GM12878 (cell line): ENCODE measurements at regions of chr5 and their contacts with region 1.

Region 1: DNA sequence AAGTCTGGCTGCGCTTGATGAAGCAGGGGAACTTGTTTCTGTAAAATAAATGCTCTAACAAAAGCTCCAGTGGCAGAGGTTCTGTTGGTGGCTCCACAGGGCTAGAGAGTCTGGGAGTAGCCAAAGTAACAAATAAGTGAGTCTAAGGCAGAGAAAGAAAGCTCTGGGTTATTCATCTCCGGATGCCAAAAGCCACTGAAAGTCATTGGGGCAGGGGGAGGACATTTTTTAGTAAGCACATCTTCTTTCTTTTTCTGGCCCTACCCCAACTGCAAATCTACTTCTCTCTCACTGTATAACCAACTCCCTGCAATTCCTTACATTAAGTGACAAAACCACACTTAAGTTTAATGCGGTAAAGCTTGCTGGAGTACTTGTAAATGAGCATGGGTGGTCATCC is 141.6 kb downstream of the INSYN2B start:
- DNase-seq: peak; percentile 45
- ATAC-seq: peak; percentile 92
- H3K4me3 ChIP-seq: no peak overlapping the region
- H3K27ac ChIP-seq: peak overlapping the region; percentile 76
- H3K4me1 ChIP-seq: peaks cover 28% of the 10 kb centered on the region
- H3K27me3 ChIP-seq: no peaks in the 10 kb centered on the region
- CTCF ChIP-seq: no peak
- EP300 ChIP-seq: no peak; a peak in 1 of 4 replicates
- POLR2A ChIP-seq: no peak
- RAD21 ChIP-seq: no peak

Region 2: GRCh38 chr5:169826618-169827017 is 12.1 kb before region 1 on chr5:
- CTCF ChIA-PET with region 1: interaction called, 7 read pairs
- POLR2A ChIA-PET with region 1: interaction called, 3 read pairs
- RAD21 ChIA-PET with region 1: interaction called, 13 read pairs
- SMC1A ChIA-PET with region 1: interaction called, 39 read pairs
- in situ Hi-C with region 1: no loop called
- intact Hi-C with region 1: no loop called
- DNase-seq: no peak
- ATAC-seq: peak; percentile 60
- H3K4me3 ChIP-seq: no peak overlapping the region
- H3K27ac ChIP-seq: no peak overlapping the region
- H3K4me1 ChIP-seq: no peaks in the 10 kb centered on the region; the same call in 1 of the 2 replicates
- H3K27me3 ChIP-seq: no peaks in the 10 kb centered on the region
- CTCF ChIP-seq: peak; percentile 7 to 13 (median 12); a peak in 1 of 6 replicates
- EP300 ChIP-seq: no peak
- POLR2A ChIP-seq: no peak
- RAD21 ChIP-seq: peak; percentile 34; the same call in 1 of the 2 replicates

Region 3: DNA sequence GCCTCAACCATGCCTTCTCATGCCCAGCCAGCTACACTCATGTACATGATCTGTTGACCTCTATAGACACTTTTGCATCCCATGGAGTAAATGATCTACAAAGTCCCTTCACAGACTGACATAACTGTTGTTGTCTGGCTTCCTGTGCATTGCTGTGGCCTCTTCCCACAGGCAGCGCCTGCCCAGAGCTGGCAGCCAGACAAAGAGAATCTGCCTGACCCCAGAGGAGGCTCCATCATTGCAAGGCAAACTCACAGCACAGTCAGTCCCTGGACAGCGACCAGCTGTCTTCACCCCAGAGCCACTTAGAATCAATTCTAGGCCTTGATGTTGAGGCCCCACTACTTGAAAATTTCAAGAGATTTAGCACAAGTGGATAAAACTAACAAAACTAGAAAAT is 76.1 kb after region 1 on chr5:
- CTCF ChIA-PET with region 1: no interaction called
- POLR2A ChIA-PET with region 1: no interaction called
- RAD21 ChIA-PET with region 1: no interaction called
- SMC1A ChIA-PET with region 1: no interaction called
- in situ Hi-C with region 1: no loop called
- intact Hi-C with region 1: no loop called
- DNase-seq: no peak
- ATAC-seq: no peak
- H3K4me3 ChIP-seq: no peak overlapping the region
- H3K27ac ChIP-seq: no peak overlapping the region
- H3K4me1 ChIP-seq: no peaks in the 10 kb centered on the region
- H3K27me3 ChIP-seq: no peaks in the 10 kb centered on the region
- CTCF ChIP-seq: no peak
- EP300 ChIP-seq: no peak
- POLR2A ChIP-seq: no peak
- RAD21 ChIP-seq: no peak

Region 4: GRCh38 chr5:170111088-170111785 is 272.5 kb after region 1 on chr5:
- CTCF ChIA-PET with region 1: no interaction called
- POLR2A ChIA-PET with region 1: no interaction called
- RAD21 ChIA-PET with region 1: no interaction called
- SMC1A ChIA-PET with region 1: no interaction called
- in situ Hi-C with region 1: no loop called
- intact Hi-C with region 1: no loop called
- DNase-seq: no peak
- ATAC-seq: no peak
- H3K4me3 ChIP-seq: no peak overlapping the region
- H3K27ac ChIP-seq: no peak overlapping the region
- H3K4me1 ChIP-seq: no peaks in the 10 kb centered on the region
- H3K27me3 ChIP-seq: peaks cover 0 to 1% of the 10 kb centered on the region in 2 experiments; a peak in 3 of 4 replicates
- CTCF ChIP-seq: no peak
- EP300 ChIP-seq: no peak
- POLR2A ChIP-seq: no peak
- RAD21 ChIP-seq: no peak